ENCODE measurements at regions of chr13 and their contacts with region 1.

Region 1: DNA sequence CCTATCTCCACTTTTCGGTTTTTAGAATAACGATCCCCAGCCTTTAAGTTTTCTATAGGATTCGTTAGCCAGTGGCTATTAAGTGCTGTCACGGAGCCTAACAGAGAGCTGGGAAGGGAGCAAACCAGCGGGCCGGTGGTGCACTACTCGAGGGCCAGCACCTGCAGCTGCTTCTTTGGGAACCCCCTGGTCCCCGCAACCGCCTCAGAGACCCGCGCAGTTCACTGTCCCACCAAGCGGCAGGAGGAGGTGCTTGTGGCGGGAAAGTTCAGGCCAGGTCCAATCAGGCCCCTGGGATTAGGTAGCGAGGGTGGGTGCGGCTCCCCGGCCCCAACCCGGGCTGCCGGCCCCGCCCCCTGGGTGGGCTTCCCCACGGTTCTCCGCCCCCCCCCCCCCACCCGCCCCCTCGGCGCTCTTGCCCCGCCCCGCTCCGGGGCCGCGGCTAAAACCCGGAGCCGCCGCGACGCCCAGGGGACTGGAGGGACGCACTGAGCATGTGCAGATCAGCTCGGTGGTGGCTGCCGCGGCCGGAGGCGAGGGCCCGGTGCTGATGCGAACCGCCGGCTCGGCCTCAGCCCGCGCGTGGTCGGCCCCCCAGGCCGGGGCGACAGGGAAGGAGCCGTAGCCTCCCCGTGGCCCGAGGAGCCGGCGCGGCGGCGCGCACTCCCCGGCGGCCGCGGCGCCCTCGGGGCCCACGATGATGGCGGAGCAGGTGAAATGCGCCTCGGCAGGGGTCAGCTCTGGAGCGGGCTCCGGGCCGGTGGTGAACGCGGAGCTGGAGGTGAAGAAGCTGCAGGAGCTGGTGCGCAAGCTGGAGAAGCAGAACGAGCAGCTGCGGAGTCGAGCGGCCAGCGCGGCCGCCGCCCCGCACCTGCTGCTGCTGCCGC is at the start of gene SLAIN1:
- DNase-seq: peak; percentile 80
- ATAC-seq: peak; percentile 87
- H3K4me3 Mint-ChIP-seq: peak within 1 kb of the TSS; percentile 98
- H3K27ac Mint-ChIP-seq: peak within 1 kb of the TSS; percentile 85
- H3K4me1 Mint-ChIP-seq: peaks cover 29% of the 10 kb centered on the region
- H3K27me3 Mint-ChIP-seq: no peaks in the 10 kb centered on the region
- CTCF ChIP-seq: no peak
- total RNA-seq, gene SLAIN1: 15.3 and 16.2 TPM in 2 replicates

Region 2: DNA sequence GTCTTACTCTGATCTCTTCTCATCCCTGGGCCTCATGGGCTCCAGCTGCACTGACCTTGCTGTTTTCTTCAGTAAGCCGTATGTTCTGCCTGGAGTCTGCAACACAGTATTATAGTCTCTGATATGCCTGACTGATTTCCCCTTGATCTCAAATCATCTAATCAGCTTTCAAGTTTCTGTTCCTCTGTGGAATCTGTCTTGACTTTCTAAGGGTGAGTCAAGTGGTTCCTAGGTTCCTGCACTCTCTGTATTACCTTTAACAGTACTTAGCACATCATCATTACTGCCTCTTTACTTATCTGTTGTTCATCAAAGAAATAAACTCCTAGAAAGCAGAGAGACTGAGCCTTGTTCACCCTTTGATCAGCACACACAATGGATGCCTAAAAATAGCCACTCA is 1710.6 kb before region 1 on chr13:
- CTCF ChIA-PET with region 1: no interaction called
- POLR2A ChIA-PET with region 1: no interaction called
- intact Hi-C with region 1: no loop called
- DNase-seq: no peak
- ATAC-seq: no peak
- H3K4me3 Mint-ChIP-seq: no peak overlapping the region
- H3K27ac Mint-ChIP-seq: no peak overlapping the region
- H3K4me1 Mint-ChIP-seq: peaks cover 2% of the 10 kb centered on the region
- H3K27me3 Mint-ChIP-seq: peaks cover 2% of the 10 kb centered on the region
- CTCF ChIP-seq: no peak

Region 3: DNA sequence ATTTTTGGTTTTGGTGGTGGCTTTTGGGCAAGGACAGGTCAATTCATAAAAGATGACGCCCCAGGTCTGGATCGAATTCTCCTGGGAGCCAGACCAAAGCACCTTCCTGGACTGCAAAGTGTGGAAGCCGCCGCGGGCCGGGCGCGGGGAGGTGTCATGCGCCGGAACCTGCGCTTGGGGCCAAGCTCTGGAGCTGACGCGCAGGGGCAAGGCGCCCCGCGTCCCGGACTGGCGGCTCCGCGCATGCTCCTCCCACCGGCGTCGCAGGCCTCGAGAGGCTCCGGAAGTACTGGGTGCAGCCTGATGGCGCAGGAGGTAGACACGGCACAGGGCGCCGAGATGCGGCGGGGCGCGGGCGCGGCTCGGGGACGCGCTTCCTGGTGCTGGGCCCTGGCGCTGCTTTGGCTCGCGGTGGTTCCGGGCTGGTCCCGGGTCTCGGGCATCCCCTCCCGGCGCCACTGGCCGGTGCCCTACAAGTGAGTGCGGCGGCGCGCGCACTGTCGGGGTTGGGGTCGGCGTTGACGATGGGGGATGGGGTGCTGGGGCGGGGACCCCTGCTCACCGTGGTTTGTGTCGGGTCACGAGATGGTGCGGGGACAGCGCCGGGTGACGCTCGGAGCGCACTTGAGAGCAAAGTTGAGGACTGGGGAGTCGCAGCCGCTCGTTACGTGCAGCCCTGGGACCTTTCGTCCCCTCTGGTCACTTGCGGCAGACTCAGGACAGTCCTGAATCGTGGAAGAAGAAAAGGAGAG is 705.5 kb before region 1 on chr13 and contains the start of gene CLN5:
- CTCF ChIA-PET with region 1: no interaction called
- POLR2A ChIA-PET with region 1: no interaction called
- intact Hi-C with region 1: loop called (anchors 1 kb)
- DNase-seq: peak; percentile 93
- ATAC-seq: peak; percentile 95
- H3K4me3 Mint-ChIP-seq: peak within 1 kb of the TSS; percentile 98
- H3K27ac Mint-ChIP-seq: peak within 1 kb of the TSS; percentile 97
- H3K4me1 Mint-ChIP-seq: peaks cover 34% of the 10 kb centered on the region
- H3K27me3 Mint-ChIP-seq: no peaks in the 10 kb centered on the region
- CTCF ChIP-seq: no peak
- total RNA-seq, gene CLN5: 20.6 and 23.6 TPM in 2 replicates

Region 4: GRCh38 chr13:77329133-77329910 is 368.1 kb before region 1 on chr13:
- CTCF ChIA-PET with region 1: no interaction called
- POLR2A ChIA-PET with region 1: no interaction called
- intact Hi-C with region 1: loop called (anchors 1 kb)
- DNase-seq: peak; percentile 79
- ATAC-seq: peak; percentile 65
- H3K4me3 Mint-ChIP-seq: peak overlapping the region; percentile 98
- H3K27ac Mint-ChIP-seq: peak overlapping the region; percentile 98
- H3K4me1 Mint-ChIP-seq: peaks cover 53% of the 10 kb centered on the region
- H3K27me3 Mint-ChIP-seq: no peaks in the 10 kb centered on the region
- CTCF ChIP-seq: no peak

Region 5: DNA sequence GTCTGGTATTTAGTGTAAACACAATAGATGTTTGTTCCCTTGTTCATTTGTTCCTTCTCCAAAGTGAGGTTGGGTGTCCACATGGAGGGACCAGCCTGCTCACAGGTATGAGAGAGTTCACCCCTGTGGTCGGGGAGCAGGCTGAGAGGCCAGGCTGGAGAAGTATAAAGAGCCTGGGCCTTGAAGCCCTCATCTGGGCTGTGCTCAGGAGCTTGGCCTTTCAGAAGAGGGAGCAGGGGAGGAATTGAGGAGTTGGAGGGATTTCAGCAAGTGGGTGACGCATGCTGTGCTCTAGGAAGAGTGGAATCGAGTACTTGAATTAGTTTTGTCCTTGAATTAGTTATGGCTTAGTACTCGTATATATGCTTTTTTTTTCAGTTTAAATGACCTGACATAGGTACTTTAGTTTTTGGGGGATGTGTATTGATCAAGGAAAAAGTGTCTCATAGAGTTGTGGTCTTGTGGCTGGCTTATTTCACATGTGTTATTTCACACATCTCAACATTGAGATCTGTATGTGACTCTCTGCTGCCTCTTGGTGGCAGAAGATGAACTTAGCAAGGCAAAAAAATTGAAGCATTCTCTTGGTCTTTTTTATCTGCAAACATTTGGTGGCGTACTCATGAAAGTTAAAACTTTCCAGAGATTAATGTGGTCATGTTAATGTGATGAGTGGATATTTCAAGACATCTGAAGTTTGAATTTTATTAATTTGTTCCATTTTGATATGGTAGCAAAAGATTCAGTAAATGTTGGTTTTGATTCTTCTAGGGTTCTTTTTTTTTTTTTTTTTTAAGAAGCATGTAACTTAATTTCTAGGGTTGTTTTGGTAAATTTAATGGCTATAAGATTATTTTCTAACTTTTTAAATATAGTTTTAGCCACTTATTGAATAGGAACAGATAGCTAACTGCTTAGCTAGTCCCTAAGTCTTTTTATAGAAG is 54.3 kb after region 1 on chr13:
- CTCF ChIA-PET with region 1: interaction called, 4 read pairs
- POLR2A ChIA-PET with region 1: no interaction called
- intact Hi-C with region 1: loop called (anchors 2 kb)
- DNase-seq: no peak
- ATAC-seq: peak; percentile 69
- H3K4me3 Mint-ChIP-seq: no peak overlapping the region
- H3K27ac Mint-ChIP-seq: no peak overlapping the region
- H3K4me1 Mint-ChIP-seq: no peaks in the 10 kb centered on the region
- H3K27me3 Mint-ChIP-seq: no peaks in the 10 kb centered on the region
- CTCF ChIP-seq: peak; percentile 91

Region 6: DNA sequence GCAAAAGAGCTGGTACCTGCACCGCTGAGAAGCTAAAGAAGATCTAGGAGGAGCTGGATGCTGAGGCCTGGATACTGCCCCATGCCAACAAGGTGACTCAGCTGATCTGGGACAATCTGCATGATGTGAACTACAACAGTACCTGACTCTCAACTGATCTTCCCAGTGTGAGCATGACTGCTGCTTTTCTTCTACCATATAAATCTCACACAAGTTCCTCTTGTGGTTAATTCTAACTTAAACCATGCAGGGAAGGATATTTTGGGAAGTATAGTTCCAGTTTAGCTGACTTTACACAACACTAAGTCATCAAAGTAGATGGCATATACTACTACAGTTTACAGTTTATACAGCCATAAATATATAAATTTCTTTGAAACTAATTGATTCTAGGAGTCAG is 91.9 kb after region 1 on chr13:
- CTCF ChIA-PET with region 1: no interaction called
- POLR2A ChIA-PET with region 1: no interaction called
- intact Hi-C with region 1: no loop called
- DNase-seq: no peak
- ATAC-seq: no peak
- H3K4me3 Mint-ChIP-seq: no peak overlapping the region
- H3K27ac Mint-ChIP-seq: no peak overlapping the region
- H3K4me1 Mint-ChIP-seq: no peaks in the 10 kb centered on the region
- H3K27me3 Mint-ChIP-seq: peaks cover 4% of the 10 kb centered on the region
- CTCF ChIP-seq: no peak

Region 7: GRCh38 chr13:79194272-79194671 is 1496.8 kb after region 1 on chr13:
- CTCF ChIA-PET with region 1: no interaction called
- POLR2A ChIA-PET with region 1: no interaction called
- intact Hi-C with region 1: loop called (anchors 2 kb)
- DNase-seq: no peak
- ATAC-seq: peak; percentile 86
- H3K4me3 Mint-ChIP-seq: peak overlapping the region; percentile 65
- H3K27ac Mint-ChIP-seq: peak overlapping the region; percentile 65
- H3K4me1 Mint-ChIP-seq: peaks cover 70% of the 10 kb centered on the region
- H3K27me3 Mint-ChIP-seq: no peaks in the 10 kb centered on the region
- CTCF ChIP-seq: no peak